ENCODE measurements at regions of chr2 and their contacts with region 1.

Region 1: DNA sequence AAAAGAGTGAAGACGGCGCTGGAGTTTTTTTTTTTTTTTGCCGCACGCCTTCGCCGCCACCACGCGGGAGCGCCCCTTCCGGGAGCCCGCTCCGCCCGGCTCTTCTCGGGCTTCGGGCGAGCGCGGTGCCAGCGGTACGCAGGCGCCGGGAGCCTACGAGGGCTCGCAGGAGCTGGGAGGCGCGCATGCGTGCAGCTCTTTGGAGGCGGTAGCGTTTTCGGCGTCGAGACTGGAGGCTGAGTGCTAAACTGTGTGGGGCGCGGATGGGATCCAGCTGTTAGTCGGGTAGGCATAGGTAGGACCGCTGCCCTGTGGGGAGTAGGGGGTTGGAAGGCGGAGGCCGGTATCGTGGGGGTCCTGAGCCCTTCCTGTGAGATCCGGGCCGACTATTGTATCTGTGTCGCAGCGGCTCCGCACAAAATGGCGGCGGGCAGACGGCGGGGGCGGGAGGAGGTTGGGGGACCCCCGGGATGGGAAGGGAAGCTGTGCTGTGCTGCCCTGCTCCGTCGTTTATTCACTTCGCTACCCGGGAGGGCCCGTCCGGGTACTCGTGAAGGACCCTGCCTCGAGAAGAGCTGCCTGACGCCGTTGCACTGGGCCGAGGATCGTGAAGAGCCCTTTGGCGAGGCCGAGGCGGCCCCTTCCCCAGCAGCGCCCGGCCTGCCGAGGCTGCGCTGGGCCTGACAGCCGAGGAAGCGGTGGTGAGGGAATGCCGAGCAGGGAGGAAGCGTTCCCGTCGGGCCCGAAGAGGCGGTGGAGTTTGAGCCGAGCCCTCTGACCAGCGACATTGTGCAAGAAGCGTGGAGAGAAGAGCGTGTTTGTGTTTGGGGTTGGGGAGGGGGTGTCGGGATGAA is at the start of gene ZNF638:
- DNase-seq: peak; percentile 89 to 94 (median 93)
- ATAC-seq: peak; percentile 98
- H3K4me3 ChIP-seq: peak within 1 kb of the TSS; percentile 79
- H3K4me3 Mint-ChIP-seq: peak within 1 kb of the TSS; percentile 95 to 100 (median 99)
- H3K27ac ChIP-seq: peak within 1 kb of the TSS; percentile 99
- H3K27ac Mint-ChIP-seq: peak within 1 kb of the TSS; percentile 97 to 100 (median 100)
- H3K4me1 ChIP-seq: peaks cover 25 to 29% of the 10 kb centered on the region in 2 donors
- H3K4me1 Mint-ChIP-seq: peaks cover 19 to 56% (median 40%) of the 10 kb centered on the region in 7 donors
- H3K27me3 ChIP-seq: no peaks in the 10 kb centered on the region
- H3K27me3 Mint-ChIP-seq: peaks cover 0 to 20% (median 5%) of the 10 kb centered on the region in 5 donors
- total RNA-seq, gene ZNF638: 113 to 204 (median 121) TPM

Region 2: DNA sequence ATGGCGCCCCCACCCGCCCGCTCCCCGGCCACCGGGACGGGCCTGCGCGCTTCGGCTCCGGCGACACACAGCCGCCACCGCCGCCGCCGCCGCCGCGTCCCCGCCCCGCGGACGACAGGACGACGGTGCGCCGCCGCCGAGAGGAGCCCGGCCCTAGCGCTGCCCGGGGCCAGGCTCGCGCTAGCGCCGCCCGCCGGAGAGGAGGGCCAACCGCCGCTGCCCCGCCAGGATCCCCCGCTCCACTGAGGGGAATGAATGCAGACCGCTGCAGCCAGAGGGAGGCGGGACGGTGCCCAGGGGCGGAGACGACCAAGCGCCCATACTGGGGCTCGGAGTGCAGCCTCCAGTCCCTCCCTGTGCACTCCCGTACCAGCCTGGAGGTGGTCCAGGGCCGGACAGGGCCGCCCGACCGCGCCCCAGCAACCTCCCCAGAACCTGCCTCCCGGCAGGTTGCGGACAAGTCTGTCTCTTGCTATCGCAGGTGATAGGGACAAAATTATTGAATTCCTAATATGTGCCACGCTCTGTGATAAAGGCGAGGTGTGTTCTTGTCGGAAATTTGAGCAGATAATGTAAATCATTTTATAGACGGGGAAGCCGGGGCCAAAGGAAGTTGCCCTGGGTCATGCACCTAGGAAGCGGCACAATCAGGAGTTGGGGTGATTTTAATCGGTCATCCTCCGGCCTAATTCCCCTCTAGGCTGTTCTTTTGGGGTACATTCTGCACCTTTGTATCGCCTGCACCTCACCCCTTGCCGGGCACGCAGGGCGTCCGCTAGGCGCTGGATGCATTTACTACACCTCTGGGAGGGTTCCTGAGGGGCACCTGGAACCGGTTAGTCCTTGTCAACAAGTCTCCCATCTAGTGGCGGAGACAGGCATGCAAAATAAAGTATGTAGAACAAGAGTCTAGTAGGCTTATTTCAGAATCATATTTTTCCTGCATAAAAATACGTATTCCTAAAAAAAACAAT is 336.8 kb before region 1 on chr2 and contains the start of gene TEX261:
- CTCF ChIA-PET with region 1: no interaction called
- POLR2A ChIA-PET with region 1: no interaction called
- intact Hi-C with region 1: loop called (anchors 2 to 10 kb)
- DNase-seq: peak; percentile 81 to 97 (median 88)
- ATAC-seq: peak; percentile 98
- H3K4me3 ChIP-seq: peak within 1 kb of the TSS; percentile 92
- H3K4me3 Mint-ChIP-seq: peak within 1 kb of the TSS; percentile 95 to 100 (median 98)
- H3K27ac ChIP-seq: peak within 1 kb of the TSS; percentile 88
- H3K27ac Mint-ChIP-seq: peak within 1 kb of the TSS; percentile 88 to 99 (median 96)
- H3K4me1 ChIP-seq: peaks cover 19 to 21% of the 10 kb centered on the region in 2 donors
- H3K4me1 Mint-ChIP-seq: peaks cover 23 to 44% (median 36%) of the 10 kb centered on the region in 7 donors
- H3K27me3 ChIP-seq: no peaks in the 10 kb centered on the region
- H3K27me3 Mint-ChIP-seq: no peaks in the 10 kb centered on the region
- total RNA-seq, gene TEX261: 33.2 to 66.3 (median 56.4) TPM

Region 3: GRCh38 chr2:71157124-71157793 is 174.5 kb before region 1 on chr2:
- CTCF ChIA-PET with region 1: no interaction called
- POLR2A ChIA-PET with region 1: no interaction called
- intact Hi-C with region 1: loop called in 1 of 2 experiments (anchors 5 kb)
- DNase-seq: peak; percentile 16 to 53 (median 47)
- ATAC-seq: peak; percentile 83
- H3K4me3 ChIP-seq: no peak overlapping the region
- H3K4me3 Mint-ChIP-seq: peak overlapping the region in 2 of 10 donors; percentile 47 to 65
- H3K27ac ChIP-seq: no peak overlapping the region
- H3K27ac Mint-ChIP-seq: peak overlapping the region in 1 of 9 donors; percentile 63
- H3K4me1 ChIP-seq: no peaks in the 10 kb centered on the region
- H3K4me1 Mint-ChIP-seq: peaks cover 5 to 10% (median 7%) of the 10 kb centered on the region in 7 donors
- H3K27me3 ChIP-seq: no peaks in the 10 kb centered on the region
- H3K27me3 Mint-ChIP-seq: peaks cover 0 to 6% (median 4%) of the 10 kb centered on the region in 5 donors

Region 4: DNA sequence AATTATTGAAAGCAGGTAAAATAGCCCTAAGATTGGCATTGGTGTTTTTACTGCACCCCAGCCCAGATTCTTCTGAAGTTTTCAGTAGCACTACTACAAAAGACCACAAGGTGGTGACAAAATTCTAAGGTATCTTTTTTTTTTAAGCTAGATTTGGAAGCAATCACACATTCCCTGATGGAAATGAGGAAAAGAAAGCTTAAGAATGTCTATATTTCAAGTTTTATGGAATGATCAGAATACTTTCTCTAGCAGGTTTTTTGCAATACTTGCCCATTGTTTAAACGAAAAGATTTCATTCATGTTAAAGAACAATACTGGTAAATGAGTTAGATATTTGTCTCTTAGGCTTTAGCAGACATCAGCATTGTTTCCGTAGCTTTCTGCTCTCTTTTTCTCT is 32.3 kb before region 1 on chr2:
- CTCF ChIA-PET with region 1: interaction called, 10 read pairs
- POLR2A ChIA-PET with region 1: interaction called, 13 read pairs
- intact Hi-C with region 1: loop called (anchors 1 to 2 kb)
- DNase-seq: peak in 5 of 9 donors; percentile 24 to 47 (median 36)
- ATAC-seq: peak; percentile 41
- H3K4me3 ChIP-seq: no peak overlapping the region
- H3K4me3 Mint-ChIP-seq: no peak overlapping the region
- H3K27ac ChIP-seq: no peak overlapping the region
- H3K27ac Mint-ChIP-seq: no peak overlapping the region
- H3K4me1 ChIP-seq: no peaks in the 10 kb centered on the region
- H3K4me1 Mint-ChIP-seq: no peaks in the 10 kb centered on the region
- H3K27me3 ChIP-seq: no peaks in the 10 kb centered on the region
- H3K27me3 Mint-ChIP-seq: peaks cover 4 to 14% (median 6%) of the 10 kb centered on the region in 5 donors

Region 5: GRCh38 chr2:71372042-71372441 is 40.2 kb after region 1 on chr2:
- CTCF ChIA-PET with region 1: no interaction called
- POLR2A ChIA-PET with region 1: interaction called, 7 read pairs
- intact Hi-C with region 1: loop called in 1 of 2 experiments (anchors 5 kb)
- DNase-seq: no peak
- ATAC-seq: no peak
- H3K4me3 ChIP-seq: no peak overlapping the region
- H3K4me3 Mint-ChIP-seq: no peak overlapping the region
- H3K27ac ChIP-seq: no peak overlapping the region
- H3K27ac Mint-ChIP-seq: peak overlapping the region in 3 of 9 donors; percentile 35 to 80 (median 50)
- H3K4me1 ChIP-seq: no peaks in the 10 kb centered on the region
- H3K4me1 Mint-ChIP-seq: peaks cover 2 to 41% (median 28%) of the 10 kb centered on the region in 7 donors
- H3K27me3 ChIP-seq: no peaks in the 10 kb centered on the region
- H3K27me3 Mint-ChIP-seq: no peaks in the 10 kb centered on the region

Region 6: DNA sequence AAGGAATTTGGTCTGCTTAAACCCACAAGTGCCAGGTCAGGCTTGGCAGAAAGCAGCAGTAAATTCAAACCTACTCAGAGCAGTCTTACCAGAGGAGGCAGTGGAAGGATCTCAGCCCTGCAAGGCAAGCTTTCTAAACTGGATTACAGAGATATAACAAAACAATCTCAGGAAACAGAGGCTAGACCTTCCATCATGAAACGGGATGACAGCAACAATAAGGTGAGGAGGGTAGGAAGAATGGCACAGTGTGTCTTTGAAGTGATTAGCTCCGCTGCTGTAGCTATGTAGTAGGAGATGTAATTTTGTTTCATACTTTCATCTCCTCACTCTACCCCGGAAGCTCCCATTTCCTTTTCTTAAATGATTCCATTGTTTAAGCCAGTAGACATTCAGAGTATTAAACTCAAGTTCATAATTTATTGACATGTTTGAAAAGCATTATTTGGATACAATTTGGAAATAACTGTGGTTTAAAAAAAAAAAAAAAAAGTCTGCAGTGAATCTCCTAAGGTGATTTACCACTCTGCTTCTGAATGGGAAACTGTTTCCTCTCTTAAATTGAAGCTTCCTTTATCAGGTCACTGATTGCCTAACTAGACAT is 92.1 kb after region 1 on chr2:
- CTCF ChIA-PET with region 1: interaction called, 3 read pairs
- POLR2A ChIA-PET with region 1: interaction called, 3 read pairs
- intact Hi-C with region 1: loop called in 1 of 2 experiments (anchors 5 kb)
- DNase-seq: no peak
- ATAC-seq: no peak
- H3K4me3 ChIP-seq: no peak overlapping the region
- H3K4me3 Mint-ChIP-seq: no peak overlapping the region
- H3K27ac ChIP-seq: no peak overlapping the region
- H3K27ac Mint-ChIP-seq: peak overlapping the region in 2 of 9 donors; percentile 5 to 18
- H3K4me1 ChIP-seq: no peaks in the 10 kb centered on the region
- H3K4me1 Mint-ChIP-seq: peaks cover 4 to 29% (median 20%) of the 10 kb centered on the region in 7 donors
- H3K27me3 ChIP-seq: no peaks in the 10 kb centered on the region
- H3K27me3 Mint-ChIP-seq: no peaks in the 10 kb centered on the region